ENCODE measurements at regions of chr2 and their contacts with region 1.

Region 1: GRCh38 chr2:88055371-88056128 is at the start of gene KRCC1:
- DNase-seq: peak; percentile 95 to 97
- H3K4me3 ChIP-seq: peak within 1 kb of the TSS; percentile 90
- H3K4me3 Mint-ChIP-seq: peak within 1 kb of the TSS; percentile 97
- H3K27ac Mint-ChIP-seq: peak within 1 kb of the TSS; percentile 94
- H3K4me1 ChIP-seq: peaks cover 16% of the 10 kb centered on the region
- H3K4me1 Mint-ChIP-seq: peaks cover 34% of the 10 kb centered on the region
- H3K27me3 ChIP-seq: no peaks in the 10 kb centered on the region
- H3K27me3 Mint-ChIP-seq: no peaks in the 10 kb centered on the region
- CTCF ChIP-seq: no peak
- total RNA-seq, gene KRCC1: 5.4 and 7.6 TPM in 2 replicates

Region 2: GRCh38 chr2:88016086-88016959 is 39.2 kb before region 1 on chr2 and contains the start of gene RNU2-63P:
- CTCF ChIA-PET with region 1: no interaction called
- POLR2A ChIA-PET with region 1: interaction called, 3 read pairs
- intact Hi-C with region 1: loop called (anchors 1 kb)
- DNase-seq: peak; percentile 86 to 87
- H3K4me3 ChIP-seq: peak within 1 kb of the TSS; percentile 92
- H3K4me3 Mint-ChIP-seq: peak within 1 kb of the TSS; percentile 83
- H3K27ac Mint-ChIP-seq: peak within 1 kb of the TSS; percentile 99
- H3K4me1 ChIP-seq: no peaks in the 10 kb centered on the region; the same call in 1 of the 2 replicates
- H3K4me1 Mint-ChIP-seq: peaks cover 15% of the 10 kb centered on the region
- H3K27me3 ChIP-seq: no peaks in the 10 kb centered on the region
- H3K27me3 Mint-ChIP-seq: peaks cover 3% of the 10 kb centered on the region
- CTCF ChIP-seq: no peak
- total RNA-seq, gene RNU2-63P: 18.6 and 19.4 TPM in 2 replicates

Region 3: GRCh38 chr2:88131201-88131998 is 75.8 kb after region 1 on chr2:
- CTCF ChIA-PET with region 1: interaction called, 28 read pairs
- POLR2A ChIA-PET with region 1: no interaction called
- intact Hi-C with region 1: loop called (anchors 1 kb)
- DNase-seq: peak in 1 of 2 experiments; percentile 47
- H3K4me3 ChIP-seq: no peak overlapping the region
- H3K4me3 Mint-ChIP-seq: peak overlapping the region; percentile 30
- H3K27ac Mint-ChIP-seq: peak overlapping the region; percentile 75
- H3K4me1 ChIP-seq: peaks cover 63% of the 10 kb centered on the region
- H3K4me1 Mint-ChIP-seq: peaks cover 59% of the 10 kb centered on the region
- H3K27me3 ChIP-seq: no peaks in the 10 kb centered on the region
- H3K27me3 Mint-ChIP-seq: no peaks in the 10 kb centered on the region
- CTCF ChIP-seq: no peak

Region 4: GRCh38 chr2:88144914-88145497 is 89.5 kb after region 1 on chr2:
- CTCF ChIA-PET with region 1: interaction called, 10 read pairs
- POLR2A ChIA-PET with region 1: no interaction called
- intact Hi-C with region 1: no loop called
- DNase-seq: no peak
- H3K4me3 ChIP-seq: no peak overlapping the region
- H3K4me3 Mint-ChIP-seq: no peak overlapping the region
- H3K27ac Mint-ChIP-seq: no peak overlapping the region
- H3K4me1 ChIP-seq: peaks cover 33% of the 10 kb centered on the region
- H3K4me1 Mint-ChIP-seq: peaks cover 20% of the 10 kb centered on the region
- H3K27me3 ChIP-seq: no peaks in the 10 kb centered on the region
- H3K27me3 Mint-ChIP-seq: no peaks in the 10 kb centered on the region
- CTCF ChIP-seq: no peak

Region 5: GRCh38 chr2:88170472-88170892 is 114.9 kb after region 1 on chr2:
- CTCF ChIA-PET with region 1: interaction called, 13 read pairs
- POLR2A ChIA-PET with region 1: no interaction called
- intact Hi-C with region 1: no loop called
- DNase-seq: no peak
- H3K4me3 ChIP-seq: peak overlapping the region; percentile 49
- H3K4me3 Mint-ChIP-seq: peak overlapping the region; percentile 78
- H3K27ac Mint-ChIP-seq: peak overlapping the region; percentile 78
- H3K4me1 ChIP-seq: no peaks in the 10 kb centered on the region
- H3K4me1 Mint-ChIP-seq: peaks cover 7% of the 10 kb centered on the region
- H3K27me3 ChIP-seq: no peaks in the 10 kb centered on the region
- H3K27me3 Mint-ChIP-seq: no peaks in the 10 kb centered on the region
- CTCF ChIP-seq: no peak

Region 6: GRCh38 chr2:88254437-88255091 is 199.0 kb after region 1 on chr2:
- CTCF ChIA-PET with region 1: interaction called, 10 read pairs
- POLR2A ChIA-PET with region 1: no interaction called
- intact Hi-C with region 1: no loop called
- DNase-seq: no peak
- H3K4me3 ChIP-seq: no peak overlapping the region
- H3K4me3 Mint-ChIP-seq: no peak overlapping the region
- H3K27ac Mint-ChIP-seq: no peak overlapping the region
- H3K4me1 ChIP-seq: no peaks in the 10 kb centered on the region
- H3K4me1 Mint-ChIP-seq: peaks cover 6% of the 10 kb centered on the region
- H3K27me3 ChIP-seq: no peaks in the 10 kb centered on the region
- H3K27me3 Mint-ChIP-seq: peaks cover 21% of the 10 kb centered on the region
- CTCF ChIP-seq: no peak

Region 7: GRCh38 chr2:88913280-88913679 is 857.7 kb after region 1 on chr2:
- CTCF ChIA-PET with region 1: no interaction called
- POLR2A ChIA-PET with region 1: no interaction called
- intact Hi-C with region 1: no loop called
- DNase-seq: no peak
- H3K4me3 ChIP-seq: no peak overlapping the region
- H3K4me3 Mint-ChIP-seq: no peak overlapping the region
- H3K27ac Mint-ChIP-seq: no peak overlapping the region
- H3K4me1 ChIP-seq: no peaks in the 10 kb centered on the region
- H3K4me1 Mint-ChIP-seq: no peaks in the 10 kb centered on the region
- H3K27me3 ChIP-seq: no peaks in the 10 kb centered on the region; the same call in 1 of the 2 replicates
- H3K27me3 Mint-ChIP-seq: peaks cover 21% of the 10 kb centered on the region
- CTCF ChIP-seq: no peak

Measured in Caco-2 (cell line).